ENCODE measurements at regions of chr1 and their contacts with region 1.

Region 1: GRCh38 chr1:184075055-184076029 is 23.8 kb downstream of the TSEN15 start:
- DNase-seq: peak in 2 of 4 donors; percentile 72 to 80
- ATAC-seq: peak; percentile 92
- H3K4me3 ChIP-seq: no peak overlapping the region
- H3K27ac ChIP-seq: no peak overlapping the region
- H3K4me1 ChIP-seq: peaks cover 0 to 7% of the 10 kb centered on the region in 2 donors
- H3K27me3 ChIP-seq: no peaks in the 10 kb centered on the region
- CTCF ChIP-seq: peak; percentile 53 to 70

Region 2: GRCh38 chr1:184222652-184223052 is 147.3 kb after region 1 on chr1:
- intact Hi-C with region 1: loop called in 1 of 2 experiments (anchors 5 kb)
- DNase-seq: peak in 3 of 4 donors; percentile 9 to 48 (median 31)
- ATAC-seq: peak; percentile 96
- H3K4me3 ChIP-seq: no peak overlapping the region
- H3K27ac ChIP-seq: no peak overlapping the region
- H3K4me1 ChIP-seq: peaks cover 0 to 11% of the 10 kb centered on the region in 2 donors
- H3K27me3 ChIP-seq: no peaks in the 10 kb centered on the region
- CTCF ChIP-seq: peak; percentile 95

Region 3: GRCh38 chr1:184242507-184242943 is 167.2 kb after region 1 on chr1:
- intact Hi-C with region 1: no loop called
- DNase-seq: peak in 2 of 4 donors; percentile 14 to 36
- ATAC-seq: peak; percentile 91
- H3K4me3 ChIP-seq: no peak overlapping the region
- H3K27ac ChIP-seq: no peak overlapping the region
- H3K4me1 ChIP-seq: peaks cover 0 to 9% of the 10 kb centered on the region in 2 donors
- H3K27me3 ChIP-seq: no peaks in the 10 kb centered on the region
- CTCF ChIP-seq: no peak

Region 4: DNA sequence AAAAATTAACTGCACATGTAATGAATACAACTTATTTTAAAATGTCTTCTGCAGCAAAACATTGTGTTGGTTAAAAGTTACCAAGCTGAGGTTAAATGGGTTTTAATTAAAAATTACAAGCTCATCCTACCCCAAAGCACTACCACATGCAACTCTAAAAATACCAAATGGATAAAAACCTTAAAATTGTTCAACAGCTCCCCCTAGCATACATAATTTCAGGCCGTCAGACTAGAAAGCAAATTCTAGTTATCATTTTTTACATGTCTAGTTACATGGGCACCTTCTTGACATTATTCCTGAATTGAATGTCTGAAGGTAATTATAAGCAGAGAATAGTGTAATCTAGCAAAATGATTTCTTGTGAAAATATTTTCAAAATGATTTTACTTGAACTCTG is 488.0 kb after region 1 on chr1:
- intact Hi-C with region 1: loop called in 1 of 2 experiments (anchors 10 kb)
- DNase-seq: no peak
- ATAC-seq: peak; percentile 62
- H3K4me3 ChIP-seq: no peak overlapping the region
- H3K27ac ChIP-seq: no peak overlapping the region
- H3K4me1 ChIP-seq: peaks cover 10 to 13% of the 10 kb centered on the region in 2 donors
- H3K27me3 ChIP-seq: no peaks in the 10 kb centered on the region
- CTCF ChIP-seq: peak in 1 of 2 donors; percentile 43